ENCODE measurements at regions of chr1 and their contacts with region 1.

Region 1: GRCh38 chr1:227563324-227564201 is at the start of gene ZNF678:
- DNase-seq: peak; percentile 91
- ATAC-seq: peak; percentile 98
- H3K4me3 ChIP-seq: peak within 1 kb of the TSS; percentile 60 to 88 (median 83)
- H3K27ac ChIP-seq: peak within 1 kb of the TSS; percentile 93
- H3K4me1 ChIP-seq: peaks cover 21% of the 10 kb centered on the region
- H3K27me3 ChIP-seq: no peaks in the 10 kb centered on the region; a peak in 1 of 5 replicates
- CTCF ChIP-seq: no peak
- EP300 ChIP-seq: no peak; a peak in 1 of 4 replicates
- POLR2A ChIP-seq: peak; percentile 68 to 82
- RAD21 ChIP-seq: 0 out of 2 replicates have a peak, but pooled peaks have one; percentile 5
- total RNA-seq, gene ZNF678: 7.6 and 9.9 TPM in 2 replicates

Region 2: GRCh38 chr1:227490478-227490877 is 73.1 kb before region 1 on chr1:
- CTCF ChIA-PET with region 1: no interaction called
- POLR2A ChIA-PET with region 1: no interaction called
- in situ Hi-C with region 1: no loop called
- intact Hi-C with region 1: no loop called
- DNase-seq: no peak
- ATAC-seq: no peak
- H3K4me3 ChIP-seq: no peak overlapping the region
- H3K27ac ChIP-seq: no peak overlapping the region
- H3K4me1 ChIP-seq: no peaks in the 10 kb centered on the region
- H3K27me3 ChIP-seq: peaks cover 1 to 19% of the 10 kb centered on the region in 2 experiments; a peak in 3 of 5 replicates
- CTCF ChIP-seq: no peak
- EP300 ChIP-seq: no peak
- POLR2A ChIP-seq: no peak
- RAD21 ChIP-seq: no peak

Region 3: DNA sequence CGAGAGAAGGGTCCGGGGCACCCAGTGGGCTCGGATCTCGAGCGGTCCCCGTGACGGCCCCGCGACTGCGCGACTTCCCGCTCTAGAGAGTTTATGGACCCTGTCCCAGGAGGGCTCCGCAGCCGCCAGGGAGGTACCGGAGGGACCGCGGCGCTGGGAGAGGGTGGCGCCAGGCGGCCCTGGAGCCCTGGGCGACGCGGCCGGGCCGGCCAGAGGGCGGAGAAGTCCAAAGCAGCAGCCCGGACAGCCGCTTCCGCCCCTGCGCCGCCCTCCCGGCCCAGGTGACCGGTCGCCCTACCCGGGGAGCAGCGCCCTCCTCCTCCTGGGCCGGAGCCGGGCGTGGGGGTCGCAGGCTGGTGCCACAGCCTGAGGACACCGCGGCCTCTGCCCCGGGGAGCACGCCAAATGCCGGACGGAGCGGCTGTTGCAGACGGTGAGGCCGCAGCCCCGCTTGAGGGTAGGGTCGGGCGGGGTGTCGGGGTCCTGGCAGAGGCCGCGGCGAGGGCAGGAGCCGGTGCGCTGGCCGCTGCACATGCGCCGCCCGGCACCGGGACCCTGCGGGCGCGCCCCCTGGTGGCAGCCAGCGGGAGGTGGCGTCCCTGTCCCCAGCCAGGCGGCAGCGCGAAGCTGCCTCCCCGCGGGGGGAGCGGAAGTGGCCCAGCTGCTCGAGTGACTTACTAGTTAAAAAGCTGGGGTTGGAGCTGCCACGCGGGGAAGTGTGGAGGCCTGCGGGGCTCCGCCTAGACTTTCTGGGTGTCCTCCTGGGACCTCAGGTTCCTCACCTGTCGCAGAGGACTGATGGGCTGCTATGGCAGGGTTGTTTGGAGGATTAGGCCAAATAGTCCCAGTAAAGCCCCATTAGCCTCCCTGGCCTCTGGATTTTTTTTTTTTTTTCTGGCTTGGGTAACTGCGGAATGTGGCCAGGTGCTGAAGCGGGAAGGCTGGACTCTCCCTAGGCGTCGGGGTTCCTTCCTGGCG is 21.1 kb before region 1 on chr1:
- CTCF ChIA-PET with region 1: no interaction called
- POLR2A ChIA-PET with region 1: interaction called, 11 read pairs
- in situ Hi-C with region 1: no loop called
- intact Hi-C with region 1: no loop called
- DNase-seq: peak; percentile 53
- ATAC-seq: peak; percentile 92
- H3K4me3 ChIP-seq: peak overlapping the region; percentile 34 to 66 (median 54); a peak in 4 of 6 replicates
- H3K27ac ChIP-seq: no peak overlapping the region
- H3K4me1 ChIP-seq: peaks cover 22% of the 10 kb centered on the region
- H3K27me3 ChIP-seq: no peaks in the 10 kb centered on the region; a peak in 1 of 5 replicates
- CTCF ChIP-seq: peak; percentile 86
- EP300 ChIP-seq: peak in 1 of 2 experiments; percentile 6; a peak in 1 of 4 replicates
- POLR2A ChIP-seq: 0 out of 4 replicates have a peak, but pooled peaks of 1 of the 2 experiments have one; percentile 36
- RAD21 ChIP-seq: peak; percentile 83

Region 4: DNA sequence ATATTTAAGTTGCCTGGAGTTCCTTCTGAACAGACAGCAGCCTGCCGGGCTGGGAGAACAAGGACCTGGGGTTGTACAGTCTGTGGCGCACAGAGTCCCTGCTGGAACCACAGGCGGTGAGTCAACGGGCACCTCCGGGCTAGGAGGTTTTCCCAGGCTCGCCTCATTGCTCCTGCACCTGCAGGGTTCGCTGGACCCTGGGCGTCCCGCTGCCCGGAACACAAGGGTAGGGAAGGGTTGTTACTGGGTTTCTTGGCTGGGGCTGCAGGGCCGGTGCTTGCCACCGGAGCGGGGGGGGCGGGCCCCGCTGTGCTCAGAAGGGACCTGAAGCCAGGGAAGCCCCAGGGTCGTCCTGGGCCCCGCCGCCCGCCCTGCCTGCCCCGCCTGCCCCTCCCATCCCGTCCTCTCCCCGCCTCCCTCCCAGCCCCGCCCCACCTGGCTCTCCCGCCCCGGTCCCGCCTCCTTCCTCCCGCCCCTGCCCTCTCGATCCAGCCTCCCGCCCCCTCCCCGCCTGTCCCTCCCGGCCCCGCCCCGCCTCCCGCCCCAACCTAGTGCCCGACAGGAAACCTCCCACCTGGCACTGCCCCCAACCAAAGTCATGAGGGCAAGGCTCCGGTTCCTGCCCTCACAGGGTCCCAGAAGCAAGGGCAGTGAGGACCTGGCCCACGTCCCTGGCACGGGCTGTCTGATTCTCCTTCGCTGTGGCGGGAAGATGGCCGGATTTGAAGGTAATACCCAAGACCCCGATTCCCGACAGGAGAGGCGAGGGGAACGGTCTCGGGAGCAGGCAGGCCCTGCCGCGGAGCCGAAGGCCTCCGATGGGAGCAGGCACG is 164.7 kb after region 1 on chr1:
- CTCF ChIA-PET with region 1: no interaction called
- POLR2A ChIA-PET with region 1: no interaction called
- in situ Hi-C with region 1: no loop called
- intact Hi-C with region 1: loop called (anchors 1 kb)
- DNase-seq: peak; percentile 69
- ATAC-seq: peak; percentile 84
- H3K4me3 ChIP-seq: peak overlapping the region; percentile 52 to 80 (median 77)
- H3K27ac ChIP-seq: peak overlapping the region; percentile 48
- H3K4me1 ChIP-seq: peaks cover 41% of the 10 kb centered on the region
- H3K27me3 ChIP-seq: no peaks in the 10 kb centered on the region
- CTCF ChIP-seq: peak; percentile 22
- EP300 ChIP-seq: no peak
- POLR2A ChIP-seq: no peak
- RAD21 ChIP-seq: no peak

Measured in HepG2 (cell line).